ENCODE measurements at regions of chr15 and their contacts with region 1.

Region 1: DNA sequence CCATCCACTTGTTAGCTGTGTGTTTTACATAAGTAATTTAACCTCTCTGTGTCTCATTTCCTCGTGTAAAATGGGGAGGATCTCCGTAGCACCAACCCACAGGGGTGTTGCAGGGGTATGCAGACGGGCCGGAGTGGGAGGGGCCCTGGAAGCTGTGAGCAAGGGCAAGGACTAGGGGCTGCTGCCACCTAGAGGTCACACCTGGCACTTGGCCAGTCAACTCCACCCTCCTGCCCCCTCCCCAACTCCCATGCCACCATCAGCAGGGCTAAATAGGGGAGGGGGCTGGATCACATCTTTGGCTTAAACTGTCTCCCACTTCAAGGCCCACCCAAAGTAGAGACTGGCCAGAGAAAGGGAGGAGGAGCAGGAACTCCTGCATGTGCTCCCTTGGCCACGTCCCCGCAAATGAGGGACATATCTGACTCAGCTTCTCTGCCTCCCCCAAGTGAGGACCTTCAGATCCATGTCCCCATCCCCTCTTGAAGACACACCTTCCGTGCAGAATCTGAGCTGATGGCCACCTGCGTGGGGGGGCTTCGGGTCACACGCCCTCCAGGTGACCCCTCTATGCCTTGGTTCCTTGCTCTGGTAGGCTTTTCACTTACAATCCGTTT is 2.6 kb downstream of the CCDC9B start:
- DNase-seq: peak; percentile 70 to 82
- ATAC-seq: peak in 1 of 4 donors; percentile 25
- H3K4me3 ChIP-seq: peak overlapping the region; percentile 66
- H3K27ac ChIP-seq: peak overlapping the region; percentile 93
- H3K4me1 ChIP-seq: peaks cover 81% of the 10 kb centered on the region
- H3K27me3 ChIP-seq: no peaks in the 10 kb centered on the region
- CTCF ChIP-seq: peak; percentile 50

Region 2: DNA sequence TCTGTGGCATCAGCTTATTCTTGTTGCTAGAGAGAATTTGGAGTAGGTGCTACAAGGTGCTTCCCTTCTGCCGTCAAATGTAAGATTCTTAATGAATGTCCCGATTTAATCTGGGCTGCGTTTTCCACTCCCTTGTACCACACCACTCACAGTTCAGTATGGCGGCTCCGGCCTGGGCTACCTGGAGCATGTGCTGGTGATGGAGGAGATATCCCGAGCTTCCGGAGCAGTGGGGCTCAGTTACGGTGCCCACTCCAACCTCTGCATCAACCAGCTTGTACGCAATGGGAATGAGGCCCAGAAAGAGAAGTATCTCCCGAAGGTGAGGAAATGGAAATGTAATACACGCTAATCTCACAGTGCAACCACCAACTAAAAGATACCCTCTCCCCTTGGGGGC is 72.3 kb after region 1 on chr15:
- intact Hi-C with region 1: loop called in 1 of 2 experiments (anchors 1 kb)
- DNase-seq: no peak
- ATAC-seq: no peak
- H3K4me3 ChIP-seq: no peak overlapping the region
- H3K27ac ChIP-seq: no peak overlapping the region
- H3K4me1 ChIP-seq: peaks cover 8% of the 10 kb centered on the region
- H3K27me3 ChIP-seq: no peaks in the 10 kb centered on the region
- CTCF ChIP-seq: no peak

Region 3: GRCh38 chr15:40525855-40526254 is 187.7 kb after region 1 on chr15:
- intact Hi-C with region 1: no loop called
- DNase-seq: no peak
- ATAC-seq: no peak
- H3K4me3 ChIP-seq: no peak overlapping the region
- H3K27ac ChIP-seq: no peak overlapping the region
- H3K4me1 ChIP-seq: no peaks in the 10 kb centered on the region
- H3K27me3 ChIP-seq: no peaks in the 10 kb centered on the region
- CTCF ChIP-seq: no peak